AG04449 (cell line): ENCODE measurements at regions of chr18 and their contacts with region 1.

Region 1: DNA sequence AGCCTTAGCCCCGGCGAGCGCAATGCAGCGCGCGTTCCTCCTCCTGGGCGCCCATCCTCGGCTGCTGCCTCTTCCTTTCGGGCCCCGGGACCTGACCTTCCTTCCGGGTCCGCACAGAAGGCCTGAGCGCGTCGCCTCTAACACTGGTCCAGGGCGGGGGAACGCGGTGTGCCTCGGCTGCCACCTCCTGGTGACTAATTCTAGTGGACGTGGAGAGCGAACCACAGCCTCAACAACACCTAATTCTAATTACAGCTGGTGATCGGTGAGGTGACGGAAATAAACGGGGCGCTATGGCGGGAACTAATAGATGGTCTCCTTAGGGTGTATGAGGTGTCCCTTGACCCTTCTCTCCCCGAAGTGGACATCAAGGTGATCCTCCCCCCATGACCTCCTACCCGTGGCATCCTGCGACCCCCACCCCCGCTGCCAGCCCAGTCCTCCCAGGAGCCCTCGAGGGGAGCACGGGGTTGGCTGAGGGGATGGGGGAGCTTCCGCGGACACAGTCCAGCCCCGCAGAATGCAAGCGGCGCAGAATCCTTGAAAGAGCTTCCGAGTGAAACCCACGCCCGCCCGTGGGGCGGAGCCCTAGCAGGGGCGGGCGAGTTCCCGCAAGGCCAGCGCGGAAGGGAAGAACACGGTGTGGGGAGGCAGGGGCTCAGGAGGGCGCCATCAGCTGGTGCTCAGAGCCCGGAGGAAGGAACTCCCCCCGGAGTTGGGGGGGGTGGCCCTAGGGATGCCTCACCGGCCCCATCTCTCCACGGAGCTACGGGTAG is 12.8 kb upstream of the HMSD start:
- DNase-seq: no peak
- H3K4me3 ChIP-seq: peak overlapping the region; percentile 70
- CTCF ChIP-seq: peak; percentile 84

Region 2: GRCh38 chr18:63511286-63511685 is 425.1 kb before region 1 on chr18:
- CTCF ChIA-PET with region 1: interaction called, 33 read pairs
- POLR2A ChIA-PET with region 1: no interaction called
- DNase-seq: no peak
- H3K4me3 ChIP-seq: no peak overlapping the region
- CTCF ChIP-seq: peak; percentile 73

Region 3: DNA sequence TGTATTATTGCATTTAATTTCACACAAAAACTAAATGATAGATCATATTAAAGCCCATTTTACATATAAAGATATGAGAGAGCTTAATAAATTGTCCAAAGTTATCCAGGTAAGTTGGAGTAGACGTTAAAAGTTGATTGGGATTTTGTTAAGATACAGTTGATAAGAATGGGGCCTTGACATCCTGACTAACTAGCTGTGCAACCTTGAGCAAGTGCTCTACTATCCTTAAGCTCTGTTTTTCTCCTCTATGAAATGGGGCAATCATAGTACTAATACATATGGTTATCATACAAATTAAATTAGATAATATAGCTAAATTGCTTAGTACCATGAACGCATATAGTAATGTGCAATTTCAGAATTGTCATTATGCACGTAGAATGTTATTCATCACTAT is 69.8 kb before region 1 on chr18:
- CTCF ChIA-PET with region 1: no interaction called
- POLR2A ChIA-PET with region 1: no interaction called
- DNase-seq: no peak
- H3K4me3 ChIP-seq: no peak overlapping the region
- CTCF ChIP-seq: no peak

Region 4: DNA sequence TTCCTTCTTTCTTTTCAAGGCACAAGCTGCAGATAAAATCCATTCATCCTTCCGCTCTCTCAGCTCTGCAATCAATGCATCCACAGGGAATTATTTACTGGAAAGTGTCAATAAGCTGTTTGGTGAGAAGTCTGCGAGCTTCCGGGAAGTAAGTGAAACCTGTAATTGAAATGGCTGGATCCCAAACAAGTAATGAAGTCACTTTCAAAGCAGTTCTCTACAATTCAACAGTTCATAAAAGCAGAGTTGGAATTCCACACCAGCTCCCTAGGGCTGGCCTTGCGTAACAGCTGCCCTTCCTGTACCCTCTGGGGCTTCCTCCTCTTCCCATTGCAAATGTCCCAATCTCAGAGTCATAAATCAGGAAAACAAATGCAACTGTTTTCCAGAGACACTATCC is 39.3 kb before region 1 on chr18:
- CTCF ChIA-PET with region 1: interaction called, 16 read pairs
- POLR2A ChIA-PET with region 1: no interaction called
- DNase-seq: no peak
- H3K4me3 ChIP-seq: no peak overlapping the region
- CTCF ChIP-seq: no peak

Region 5: GRCh38 chr18:63949068-63949737 is 12.9 kb after region 1 on chr18 and contains the start of gene HMSD:
- CTCF ChIA-PET with region 1: interaction called, 12 read pairs
- POLR2A ChIA-PET with region 1: no interaction called
- DNase-seq: no peak
- H3K4me3 ChIP-seq: peak within 1 kb of the TSS; percentile 56
- CTCF ChIP-seq: peak; percentile 47

Region 6: GRCh38 chr18:63994783-63995399 is 58.5 kb after region 1 on chr18:
- CTCF ChIA-PET with region 1: interaction called, 15 read pairs
- POLR2A ChIA-PET with region 1: no interaction called
- DNase-seq: no peak
- H3K4me3 ChIP-seq: no peak overlapping the region
- CTCF ChIP-seq: peak; percentile 82